ENCODE measurements at regions of chr4 and their contacts with region 1.

Region 1: GRCh38 chr4:121656269-121656641 is 40.5 kb downstream of the ANXA5 start:
- DNase-seq: peak in 1 of 2 donors; percentile 31
- ATAC-seq: peak in 1 of 4 donors; percentile 43
- H3K4me3 ChIP-seq: no peak overlapping the region
- H3K27ac ChIP-seq: no peak overlapping the region
- H3K4me1 ChIP-seq: no peaks in the 10 kb centered on the region
- H3K27me3 ChIP-seq: peaks cover 0 to 3% (median 0%) of the 10 kb centered on the region in 3 donors
- CTCF ChIP-seq: no peak

Region 2: GRCh38 chr4:121370729-121371325 is 285.4 kb before region 1 on chr4:
- intact Hi-C with region 1: loop called (anchors 5 to 10 kb)
- DNase-seq: no peak
- ATAC-seq: no peak
- H3K4me3 ChIP-seq: no peak overlapping the region
- H3K27ac ChIP-seq: no peak overlapping the region
- H3K4me1 ChIP-seq: no peaks in the 10 kb centered on the region
- H3K27me3 ChIP-seq: no peaks in the 10 kb centered on the region
- CTCF ChIP-seq: peak; percentile 50

Region 3: GRCh38 chr4:121484633-121485032 is 171.6 kb before region 1 on chr4:
- intact Hi-C with region 1: loop called in 1 of 2 experiments (anchors 5 kb)
- DNase-seq: no peak
- ATAC-seq: peak in 1 of 4 donors; percentile 31
- H3K4me3 ChIP-seq: no peak overlapping the region
- H3K27ac ChIP-seq: no peak overlapping the region
- H3K4me1 ChIP-seq: no peaks in the 10 kb centered on the region
- H3K27me3 ChIP-seq: no peaks in the 10 kb centered on the region
- CTCF ChIP-seq: peak; percentile 43

Region 4: DNA sequence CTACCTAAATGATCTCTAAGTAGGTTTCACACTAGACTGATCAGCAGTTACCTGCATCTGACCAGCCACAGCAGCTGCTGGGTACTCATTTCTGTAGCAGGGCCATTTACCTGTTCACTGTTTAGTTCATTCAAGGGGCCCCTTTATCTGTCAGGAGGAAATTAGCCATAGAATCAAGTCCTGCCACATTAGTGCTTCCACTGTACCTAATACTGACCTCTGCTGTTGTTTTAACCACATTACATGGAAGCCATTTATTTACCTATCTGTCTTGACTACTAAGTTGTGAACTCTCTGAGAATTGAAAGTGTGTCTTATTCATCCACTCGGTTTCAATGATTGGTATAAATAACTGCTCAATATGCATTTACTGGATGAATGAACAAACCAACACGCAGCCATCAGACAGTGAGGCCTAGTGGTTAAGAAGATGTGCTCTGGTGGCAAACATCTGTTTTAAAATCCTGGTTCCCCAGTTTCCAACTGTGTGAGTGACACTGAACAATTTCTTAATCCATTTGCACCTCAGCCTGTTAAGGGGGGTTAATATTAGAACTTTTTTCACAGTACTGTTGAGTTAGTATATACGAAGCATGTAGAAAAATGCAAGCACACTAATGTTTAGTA is 70.5 kb after region 1 on chr4:
- intact Hi-C with region 1: loop called in 1 of 2 experiments (anchors 5 kb)
- DNase-seq: no peak
- ATAC-seq: peak; percentile 64 to 78 (median 72)
- H3K4me3 ChIP-seq: no peak overlapping the region
- H3K27ac ChIP-seq: no peak overlapping the region
- H3K4me1 ChIP-seq: no peaks in the 10 kb centered on the region
- H3K27me3 ChIP-seq: no peaks in the 10 kb centered on the region
- CTCF ChIP-seq: peak; percentile 66

Region 5: DNA sequence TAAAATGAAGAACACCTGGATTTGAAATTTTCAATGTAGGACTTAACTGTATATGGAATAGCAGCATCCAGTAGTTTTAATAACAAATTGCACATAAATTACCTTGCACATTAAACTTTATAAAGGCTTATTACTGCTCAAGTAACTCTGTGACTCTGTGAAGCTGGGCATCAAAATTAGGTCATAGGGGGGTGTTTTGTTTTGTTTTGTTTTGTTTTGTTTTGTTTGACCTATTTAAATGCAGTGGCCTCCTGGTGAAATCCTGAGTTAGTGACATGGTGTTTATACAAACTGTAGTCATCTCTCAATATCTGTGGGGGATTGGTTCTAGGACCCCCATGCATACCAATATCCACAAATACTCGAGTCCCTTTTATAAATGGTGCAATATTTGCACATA is 670.7 kb after region 1 on chr4:
- intact Hi-C with region 1: no loop called
- DNase-seq: no peak
- ATAC-seq: no peak
- H3K4me3 ChIP-seq: no peak overlapping the region
- H3K27ac ChIP-seq: no peak overlapping the region
- H3K4me1 ChIP-seq: no peaks in the 10 kb centered on the region
- H3K27me3 ChIP-seq: no peaks in the 10 kb centered on the region
- CTCF ChIP-seq: no peak

Measured in psoas muscle (tissue), 8 donors.